HEK293T (cell line): ENCODE measurements at regions of chr9 and their contacts with region 1.

Region 1: GRCh38 chr9:137240861-137241489 is at the start of gene TUBB4B:
- DNase-seq: peak; percentile 98

Region 2: GRCh38 chr9:137086531-137087408 is 154.2 kb before region 1 on chr9 and contains the start of gene MAN1B1:
- CTCF ChIA-PET with region 1: no interaction called
- POLR2A ChIA-PET with region 1: interaction called, 12 read pairs
- DNase-seq: peak; percentile 99

Region 3: DNA sequence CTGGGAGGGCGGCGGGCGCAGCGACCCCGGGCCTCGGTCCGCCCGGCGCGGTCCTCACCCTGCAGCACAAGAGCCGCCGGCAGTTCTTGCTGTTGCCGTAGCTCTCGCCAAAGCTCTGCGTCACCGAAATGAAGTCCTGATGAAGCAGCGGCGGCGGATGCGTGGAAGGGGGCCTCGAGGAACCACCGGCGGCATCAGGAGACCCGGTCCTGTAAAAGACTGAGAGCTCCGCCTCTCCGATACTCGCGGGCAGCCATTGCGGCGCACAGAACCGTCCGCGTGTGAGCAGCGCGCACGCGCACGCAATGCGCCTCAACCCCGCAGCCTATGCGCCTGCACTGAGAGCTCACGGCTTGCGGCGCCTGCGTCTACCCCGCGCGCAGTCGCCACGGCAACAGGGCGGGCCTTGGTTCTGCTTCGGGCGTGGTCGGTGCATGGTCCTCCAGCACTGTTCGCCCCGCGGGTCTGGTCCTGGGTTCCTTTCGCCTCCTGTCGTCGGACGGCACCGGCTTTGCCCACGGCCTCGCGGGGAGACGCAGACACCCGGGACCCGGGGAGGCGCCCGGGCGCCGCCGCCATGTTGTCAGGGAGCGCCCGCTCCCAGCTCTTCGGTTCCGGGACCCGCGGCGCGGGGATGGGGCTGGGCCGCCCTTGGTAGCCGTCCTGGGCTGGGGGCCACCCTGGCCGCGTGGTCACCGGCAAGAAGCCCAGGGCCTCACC is 111.4 kb before region 1 on chr9:
- CTCF ChIA-PET with region 1: interaction called, 8 read pairs
- POLR2A ChIA-PET with region 1: interaction called, 13 read pairs
- DNase-seq: peak; percentile 94

Region 4: DNA sequence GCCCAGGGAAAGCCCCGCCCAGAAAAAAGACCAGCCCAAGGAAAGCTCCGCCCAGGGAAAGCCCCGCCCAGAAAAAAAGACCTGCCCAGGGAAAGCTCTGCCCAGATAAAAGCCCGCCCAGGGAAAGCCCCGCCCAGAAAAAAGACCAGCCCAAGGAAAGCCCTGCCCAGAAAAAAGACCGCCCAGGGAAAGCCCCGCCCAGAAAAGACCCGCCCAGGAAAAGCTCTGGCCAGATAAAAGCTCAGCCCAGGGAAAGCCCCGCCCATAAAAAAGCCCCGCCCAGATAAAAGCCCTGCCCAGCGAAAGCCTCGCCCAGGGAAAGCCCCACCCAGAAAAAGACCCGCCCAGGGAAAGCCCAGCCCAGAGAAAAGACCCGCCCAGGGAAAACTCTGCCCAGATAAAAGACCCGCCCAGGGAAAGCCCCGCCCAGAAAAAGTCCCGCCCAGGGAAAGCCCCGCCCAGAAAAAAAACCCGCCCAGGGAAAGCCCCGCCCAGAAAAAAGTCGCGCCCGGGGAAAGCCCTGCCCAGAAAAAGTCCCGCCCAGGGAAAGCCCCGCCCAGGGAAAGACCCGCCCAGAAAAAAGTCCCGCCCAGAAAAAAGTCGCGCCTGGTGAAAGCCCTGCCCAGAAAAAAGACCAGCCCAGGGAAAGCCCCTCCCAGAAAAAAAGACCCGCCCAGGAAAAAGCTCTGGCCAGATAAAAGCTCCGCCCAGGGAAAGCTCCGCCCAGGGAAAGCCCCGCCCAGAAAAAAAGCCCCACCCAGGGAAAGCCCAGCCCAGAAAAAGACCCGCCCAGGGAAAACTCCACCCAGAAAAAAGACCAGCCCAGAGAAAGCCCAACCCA is 90.1 kb before region 1 on chr9:
- CTCF ChIA-PET with region 1: interaction called, 4 read pairs
- POLR2A ChIA-PET with region 1: interaction called, 13 read pairs
- DNase-seq: peak; percentile 83

Region 5: GRCh38 chr9:137223078-137223970 is 17.7 kb before region 1 on chr9:
- CTCF ChIA-PET with region 1: interaction called, 9 read pairs
- POLR2A ChIA-PET with region 1: interaction called, 20 read pairs
- DNase-seq: peak; percentile 95

Region 6: DNA sequence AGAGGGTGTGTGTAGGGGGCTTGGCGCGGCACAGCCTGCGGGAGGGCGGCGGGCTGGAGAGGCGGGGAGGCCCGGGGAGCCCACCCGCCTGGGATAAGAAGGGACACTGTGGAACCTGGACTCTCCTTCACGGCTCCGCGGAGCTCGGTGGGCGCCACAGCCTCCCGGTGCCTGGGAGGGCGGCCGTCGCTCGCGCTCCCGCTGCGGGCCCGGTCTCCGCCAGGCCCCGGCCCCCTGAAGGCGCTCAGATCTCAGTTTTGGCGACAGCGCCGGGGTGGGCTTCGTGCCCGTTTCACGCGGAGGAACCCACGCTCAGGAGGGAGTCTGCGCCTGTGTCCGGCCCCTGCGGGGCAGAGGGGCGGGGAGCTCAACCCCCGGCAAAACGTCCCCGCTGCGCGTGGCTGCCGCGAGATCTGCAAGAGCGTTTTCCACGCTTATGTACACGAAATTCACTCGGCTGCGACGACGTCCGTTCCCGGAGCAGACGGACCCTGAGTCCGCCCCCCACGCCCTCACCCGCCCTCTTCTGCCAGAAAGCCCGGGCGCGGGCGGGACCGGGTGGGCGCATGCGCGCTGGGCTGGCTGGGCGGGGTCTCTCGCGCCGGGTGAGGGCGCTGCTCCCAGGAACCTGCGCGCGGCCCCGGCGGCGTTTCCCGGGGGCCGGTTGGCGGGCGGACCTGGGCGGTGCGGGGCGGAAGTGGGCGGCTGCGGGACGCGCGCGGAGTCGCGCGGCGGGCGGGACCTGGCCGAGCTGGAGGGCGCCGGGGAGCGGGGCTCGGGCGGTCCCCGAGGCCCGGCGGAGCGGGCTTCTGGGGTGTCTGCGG is 13.9 kb after region 1 on chr9 and contains the start of gene NELFB:
- CTCF ChIA-PET with region 1: interaction called, 9 read pairs
- POLR2A ChIA-PET with region 1: interaction called, 90 read pairs
- DNase-seq: peak; percentile 96

Region 7: GRCh38 chr9:137266162-137266527 is 25.2 kb after region 1 on chr9:
- CTCF ChIA-PET with region 1: interaction called, 3 read pairs
- POLR2A ChIA-PET with region 1: interaction called, 11 read pairs
- DNase-seq: no peak